Posterior cingulate gyrus (tissue), 11 donors: ENCODE measurements at regions of chr6 and their contacts with region 1.

Region 1: DNA sequence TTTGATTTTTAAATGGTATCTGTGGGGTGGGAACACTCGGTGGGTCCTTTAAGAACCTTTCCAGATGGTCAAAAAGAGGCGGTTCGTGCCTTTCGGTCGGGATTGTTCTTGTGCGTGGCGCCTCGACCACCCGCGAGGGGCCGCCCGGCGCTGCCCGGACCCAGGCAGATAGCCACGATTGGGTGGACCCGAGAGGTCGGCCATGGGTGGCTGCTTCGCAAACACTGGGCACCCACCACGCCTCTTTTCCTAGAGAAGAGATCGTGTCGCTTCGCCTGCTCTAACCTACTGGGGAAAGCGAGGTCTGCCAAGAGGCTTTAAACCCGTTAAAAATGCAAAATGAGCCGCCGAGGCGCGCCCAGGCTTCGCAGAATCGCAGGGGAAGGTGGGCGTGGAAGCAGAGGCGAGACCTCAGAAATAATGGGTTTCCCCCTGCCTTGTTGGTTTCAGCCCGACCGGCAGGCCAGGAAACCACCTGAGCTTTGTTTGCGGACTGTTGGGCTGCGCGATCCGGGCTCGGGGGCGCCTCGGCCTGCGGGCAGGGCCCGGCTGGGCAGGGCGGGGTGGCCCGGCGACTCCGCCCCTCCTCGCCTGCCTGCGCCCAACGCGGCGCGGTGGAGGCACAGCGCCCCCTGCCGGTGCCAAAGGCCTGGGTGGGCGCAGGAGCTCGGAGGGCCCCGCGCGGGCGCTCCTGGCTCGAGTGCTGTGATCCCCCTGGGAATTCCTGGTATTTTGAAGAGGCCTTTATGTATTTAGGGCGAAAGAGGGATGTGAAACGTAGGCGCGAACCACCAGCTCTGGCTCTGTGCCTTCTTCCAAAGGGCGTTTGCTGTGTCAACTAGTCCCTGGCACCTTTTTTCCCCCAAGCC is 1.6 kb downstream of the MARCKS start:
- DNase-seq: peak; percentile 74 to 97 (median 82)

Region 2: DNA sequence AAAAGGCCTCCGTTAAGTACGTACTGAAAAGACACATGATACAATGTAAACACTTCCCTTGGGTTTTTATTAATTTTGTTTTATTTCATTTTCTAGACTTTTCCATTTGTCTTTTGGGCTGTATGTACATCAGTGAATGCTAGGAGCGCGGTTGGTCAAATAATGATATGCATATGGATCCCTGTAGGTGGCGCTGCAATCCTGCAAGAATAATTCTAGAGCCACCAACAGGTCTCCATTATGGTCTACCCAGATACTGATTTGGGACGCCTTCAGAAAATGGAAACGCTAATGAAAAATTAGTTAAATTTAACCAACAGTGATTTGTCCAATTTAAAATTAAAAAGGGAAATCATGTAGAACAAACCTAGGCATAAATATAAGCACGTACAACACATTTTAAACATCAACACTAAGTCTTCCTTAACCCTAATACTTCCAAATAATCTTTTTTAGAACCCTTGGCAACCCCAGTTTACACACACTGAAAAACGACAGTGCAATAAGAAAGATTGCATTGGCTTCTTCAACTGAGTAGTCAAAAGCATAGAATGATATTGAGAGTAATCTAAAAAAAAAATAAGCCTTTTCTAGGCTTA is 1078.1 kb before region 1 on chr6:
- intact Hi-C with region 1: loop called (anchors 2 kb)
- DNase-seq: peak in 9 of 10 donors; percentile 26 to 90 (median 69)

Region 3: GRCh38 chr6:112879920-112880413 is 978.7 kb before region 1 on chr6:
- intact Hi-C with region 1: loop called (anchors 5 kb)
- DNase-seq: peak in 5 of 10 donors; percentile 7 to 83 (median 60)

Region 4: GRCh38 chr6:113182370-113183141 is 676.2 kb before region 1 on chr6:
- intact Hi-C with region 1: loop called (anchors 5 kb)
- DNase-seq: no peak

Region 5: GRCh38 chr6:113292646-113293422 is 565.9 kb before region 1 on chr6:
- intact Hi-C with region 1: loop called (anchors 10 kb)
- DNase-seq: no peak

Region 6: DNA sequence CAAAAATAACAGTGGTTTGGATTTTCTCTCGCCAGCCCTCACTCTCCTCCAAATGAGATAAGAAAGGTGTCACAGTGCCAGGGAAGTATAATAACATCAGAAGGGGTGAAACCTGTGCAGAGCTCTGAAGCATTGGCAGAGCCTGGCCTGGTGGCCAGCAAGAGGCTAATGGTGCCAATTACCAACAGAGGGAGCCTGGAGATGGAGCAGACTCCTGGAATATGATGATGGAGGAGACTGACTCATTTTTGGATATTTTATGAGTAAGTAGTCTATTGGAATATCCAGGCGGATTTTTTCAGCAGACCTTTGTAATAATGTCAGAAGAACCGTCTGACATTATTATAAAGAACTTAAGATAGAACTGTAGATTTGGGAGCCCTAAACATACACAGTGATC is 444.2 kb before region 1 on chr6:
- intact Hi-C with region 1: loop called (anchors 5 kb)
- DNase-seq: peak in 2 of 10 donors; percentile 20 to 70

Region 7: GRCh38 chr6:113564371-113565161 is 294.1 kb before region 1 on chr6:
- intact Hi-C with region 1: loop called (anchors 2 kb)
- DNase-seq: peak; percentile 66 to 96 (median 79)

Region 8: GRCh38 chr6:113796038-113796437 is 62.7 kb before region 1 on chr6:
- intact Hi-C with region 1: no loop called
- DNase-seq: no peak

Region 9: DNA sequence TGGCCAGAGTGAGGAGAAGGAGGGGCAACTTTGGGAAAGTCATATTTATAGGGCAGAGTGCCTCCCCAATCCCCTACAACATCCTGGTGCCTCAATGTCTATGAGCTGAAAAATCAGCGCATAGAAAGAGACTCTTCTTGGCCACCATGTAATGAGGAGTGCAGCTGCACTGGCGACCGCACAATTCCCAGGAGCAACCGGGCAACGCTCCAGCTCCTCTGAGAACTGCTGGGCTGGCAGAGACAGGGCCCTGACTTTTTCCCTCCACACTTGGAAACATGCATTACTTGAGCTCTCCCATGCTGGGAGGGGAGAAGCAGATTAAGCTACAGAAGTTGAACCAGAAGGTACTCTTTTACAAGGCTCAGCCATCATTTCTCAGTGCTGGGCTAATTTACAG is 32.9 kb before region 1 on chr6:
- intact Hi-C with region 1: no loop called
- DNase-seq: peak; percentile 61 to 96 (median 83)